ENCODE measurements at regions of chr7 and their contacts with region 1.

Region 1: GRCh38 chr7:85023045-85023712 is 163.7 kb downstream of the SEMA3D start:
- DNase-seq: no peak
- ATAC-seq: 0 out of 3 replicates have a peak, but pooled peaks have one; percentile 42
- H3K4me3 ChIP-seq: no peak overlapping the region
- H3K27ac ChIP-seq: no peak overlapping the region
- H3K4me1 ChIP-seq: no peaks in the 10 kb centered on the region; the same call in 1 of the 2 replicates
- H3K27me3 ChIP-seq: no peaks in the 10 kb centered on the region
- CTCF ChIP-seq: peak; percentile 42 to 62 (median 52); a peak in 4 of 6 replicates
- EP300 ChIP-seq: no peak
- POLR2A ChIP-seq: no peak
- RAD21 ChIP-seq: peak; percentile 83

Region 2: DNA sequence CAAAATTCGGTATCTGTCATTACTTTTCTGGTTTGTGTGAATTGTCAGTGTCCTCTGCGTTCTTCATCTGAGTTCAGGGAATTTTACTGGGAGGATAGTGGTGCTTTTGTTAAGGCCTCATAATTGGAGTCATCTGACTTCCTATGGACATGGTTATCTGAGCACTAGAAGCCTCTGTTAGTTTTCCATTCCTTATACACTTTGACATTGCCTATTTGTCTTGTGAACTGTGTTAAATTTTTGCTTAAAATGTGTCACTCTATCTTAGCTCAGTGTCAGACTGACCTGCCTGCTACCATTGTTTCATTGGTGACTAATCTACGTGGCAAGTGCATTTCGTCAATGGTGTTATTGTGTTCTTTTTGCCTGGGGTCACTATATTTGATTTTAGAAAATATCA is 1081.9 kb before region 1 on chr7:
- CTCF ChIA-PET with region 1: interaction called, 186 read pairs
- POLR2A ChIA-PET with region 1: no interaction called
- RAD21 ChIA-PET with region 1: interaction called, 79 read pairs
- SMC1A ChIA-PET with region 1: interaction called, 116 read pairs
- in situ Hi-C with region 1: no loop called
- intact Hi-C with region 1: loop called (anchors 1 kb)
- DNase-seq: no peak
- ATAC-seq: no peak
- H3K4me3 ChIP-seq: no peak overlapping the region
- H3K27ac ChIP-seq: no peak overlapping the region
- H3K4me1 ChIP-seq: no peaks in the 10 kb centered on the region
- H3K27me3 ChIP-seq: no peaks in the 10 kb centered on the region; a peak in 1 of 4 replicates
- CTCF ChIP-seq: no peak
- EP300 ChIP-seq: no peak
- POLR2A ChIP-seq: no peak
- RAD21 ChIP-seq: no peak

Region 3: GRCh38 chr7:84614821-84615505 is 408.2 kb before region 1 on chr7:
- CTCF ChIA-PET with region 1: no interaction called
- POLR2A ChIA-PET with region 1: no interaction called
- RAD21 ChIA-PET with region 1: no interaction called
- SMC1A ChIA-PET with region 1: no interaction called
- in situ Hi-C with region 1: no loop called
- intact Hi-C with region 1: loop called (anchors 5 kb)
- DNase-seq: no peak
- ATAC-seq: peak; percentile 31; the same call in 1 of the 3 replicates
- H3K4me3 ChIP-seq: no peak overlapping the region
- H3K27ac ChIP-seq: no peak overlapping the region
- H3K4me1 ChIP-seq: no peaks in the 10 kb centered on the region
- H3K27me3 ChIP-seq: no peaks in the 10 kb centered on the region
- CTCF ChIP-seq: no peak
- EP300 ChIP-seq: no peak
- POLR2A ChIP-seq: no peak
- RAD21 ChIP-seq: no peak

Region 4: GRCh38 chr7:85010306-85010705 is 12.9 kb before region 1 on chr7:
- CTCF ChIA-PET with region 1: interaction called, 5 read pairs
- POLR2A ChIA-PET with region 1: no interaction called
- RAD21 ChIA-PET with region 1: no interaction called
- SMC1A ChIA-PET with region 1: interaction called, 15 read pairs
- in situ Hi-C with region 1: no loop called
- intact Hi-C with region 1: no loop called
- DNase-seq: no peak
- ATAC-seq: no peak
- H3K4me3 ChIP-seq: no peak overlapping the region
- H3K27ac ChIP-seq: no peak overlapping the region
- H3K4me1 ChIP-seq: no peaks in the 10 kb centered on the region
- H3K27me3 ChIP-seq: no peaks in the 10 kb centered on the region
- CTCF ChIP-seq: no peak
- EP300 ChIP-seq: no peak
- POLR2A ChIP-seq: no peak
- RAD21 ChIP-seq: no peak